ENCODE measurements at regions of chr3 and their contacts with region 1.

Region 1: GRCh38 chr3:188286087-188286513 is 132.1 kb downstream of the LPP start:
- DNase-seq: peak; percentile 29
- ATAC-seq: no peak
- H3K4me3 Mint-ChIP-seq: no peak overlapping the region
- H3K27ac Mint-ChIP-seq: peak overlapping the region; percentile 72
- H3K4me1 Mint-ChIP-seq: peaks cover 55% of the 10 kb centered on the region
- H3K27me3 Mint-ChIP-seq: no peaks in the 10 kb centered on the region

Region 2: GRCh38 chr3:188061133-188061532 is 225.0 kb before region 1 on chr3:
- CTCF ChIA-PET with region 1: no interaction called
- POLR2A ChIA-PET with region 1: no interaction called
- intact Hi-C with region 1: loop called in 1 of 2 experiments (anchors 10 kb)
- DNase-seq: peak; percentile 76
- ATAC-seq: peak; percentile 98
- H3K4me3 Mint-ChIP-seq: peak overlapping the region; percentile 25
- H3K27ac Mint-ChIP-seq: peak overlapping the region; percentile 77
- H3K4me1 Mint-ChIP-seq: peaks cover 35% of the 10 kb centered on the region
- H3K27me3 Mint-ChIP-seq: no peaks in the 10 kb centered on the region

Region 3: DNA sequence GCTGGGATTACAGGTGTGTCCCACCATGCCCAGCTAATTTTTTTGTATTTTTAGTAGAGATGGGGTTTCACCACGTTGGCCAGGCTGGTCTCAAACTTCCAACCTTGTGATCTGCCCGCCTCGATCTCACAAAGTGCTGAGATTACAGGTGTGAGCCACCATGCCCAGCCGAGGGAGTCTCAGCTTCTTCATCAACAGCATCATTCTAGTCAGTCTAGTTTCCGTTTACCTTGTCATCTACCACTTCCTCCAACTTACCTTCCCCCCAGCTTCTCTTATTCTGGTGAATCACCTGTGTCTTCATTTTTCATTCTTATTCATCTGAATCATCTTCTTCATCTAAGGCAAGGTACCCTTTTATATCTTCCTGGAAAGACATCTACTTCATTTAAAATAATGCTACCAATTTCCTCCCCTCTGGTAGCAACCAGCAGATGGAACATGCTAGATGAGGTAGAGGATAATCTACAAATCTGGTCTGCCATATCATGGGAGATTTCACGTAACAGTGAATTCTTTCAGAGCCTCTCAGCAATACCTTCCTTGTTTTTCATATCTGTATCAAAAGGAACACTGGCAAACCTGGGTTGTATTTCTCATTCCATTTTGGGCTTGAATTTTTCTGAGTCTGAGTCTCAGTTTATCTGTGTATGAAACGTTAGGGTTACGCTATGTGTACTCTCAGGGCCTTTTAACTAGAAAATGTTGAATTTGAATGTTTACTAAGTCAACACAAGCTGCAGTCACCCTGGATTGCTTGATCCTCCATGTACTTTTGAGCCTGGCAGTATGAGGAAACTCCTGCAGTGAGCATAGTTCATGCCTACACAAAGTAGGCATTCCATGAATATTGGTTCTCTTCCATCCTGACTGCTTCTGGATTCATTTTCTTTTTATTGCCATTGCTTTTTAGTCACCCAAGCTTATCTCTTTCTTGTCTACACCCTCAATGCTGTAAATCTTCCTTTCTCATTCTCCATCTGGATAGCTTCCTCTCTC is 115.3 kb before region 1 on chr3:
- CTCF ChIA-PET with region 1: interaction called, 4 read pairs
- POLR2A ChIA-PET with region 1: interaction called, 7 read pairs
- intact Hi-C with region 1: loop called in 1 of 2 experiments (anchors 2 kb)
- DNase-seq: peak; percentile 82
- ATAC-seq: peak; percentile 91
- H3K4me3 Mint-ChIP-seq: peak overlapping the region; percentile 20
- H3K27ac Mint-ChIP-seq: peak overlapping the region; percentile 88
- H3K4me1 Mint-ChIP-seq: peaks cover 59% of the 10 kb centered on the region
- H3K27me3 Mint-ChIP-seq: no peaks in the 10 kb centered on the region

Region 4: DNA sequence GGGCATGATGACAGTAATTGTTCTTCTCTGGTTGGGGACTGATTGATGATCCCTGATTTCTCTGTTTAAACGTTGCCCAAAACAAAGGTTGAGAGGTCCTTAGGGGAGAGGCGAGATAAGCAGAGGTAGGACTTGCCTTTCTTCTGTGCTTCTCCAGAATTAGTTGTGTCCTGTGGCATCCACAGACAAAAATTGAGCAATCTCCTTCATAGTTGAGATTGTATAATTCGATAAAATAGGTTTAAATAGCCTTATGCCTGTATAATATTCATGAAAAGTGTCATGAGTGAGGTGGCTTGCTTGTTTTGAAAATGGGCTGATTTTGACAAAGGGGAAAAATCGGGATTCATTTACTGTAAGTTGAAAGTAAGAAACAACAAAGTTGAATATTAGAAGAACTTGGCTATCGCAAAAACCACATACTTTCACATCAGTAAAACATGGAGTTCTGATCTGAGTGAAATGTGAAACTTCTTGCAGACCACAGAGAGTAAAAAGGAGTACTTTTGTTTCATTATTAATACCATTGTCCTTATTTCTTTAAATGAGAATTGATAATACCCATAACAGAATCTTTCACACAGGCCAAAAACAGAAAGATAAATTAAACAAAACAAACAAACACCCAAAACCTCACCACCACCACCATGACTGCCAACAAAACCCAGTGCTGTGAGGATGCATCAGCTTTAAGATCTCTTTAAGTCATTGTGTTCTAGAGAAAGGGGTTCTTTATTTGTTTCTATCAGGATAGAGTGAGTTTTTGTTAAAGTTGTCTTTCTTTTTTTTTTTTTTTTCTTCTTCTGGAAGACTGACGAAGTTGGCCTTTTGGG is 23.6 kb after region 1 on chr3:
- CTCF ChIA-PET with region 1: interaction called, 3 read pairs
- POLR2A ChIA-PET with region 1: interaction called, 3 read pairs
- intact Hi-C with region 1: loop called (anchors 1 kb)
- DNase-seq: peak; percentile 50
- ATAC-seq: peak; percentile 85
- H3K4me3 Mint-ChIP-seq: peak overlapping the region; percentile 9
- H3K27ac Mint-ChIP-seq: peak overlapping the region; percentile 80
- H3K4me1 Mint-ChIP-seq: peaks cover 26% of the 10 kb centered on the region
- H3K27me3 Mint-ChIP-seq: no peaks in the 10 kb centered on the region